CD8-positive, alpha-beta T cell (primary cell): ENCODE measurements at regions of chr2 and their contacts with region 1.

Region 1: DNA sequence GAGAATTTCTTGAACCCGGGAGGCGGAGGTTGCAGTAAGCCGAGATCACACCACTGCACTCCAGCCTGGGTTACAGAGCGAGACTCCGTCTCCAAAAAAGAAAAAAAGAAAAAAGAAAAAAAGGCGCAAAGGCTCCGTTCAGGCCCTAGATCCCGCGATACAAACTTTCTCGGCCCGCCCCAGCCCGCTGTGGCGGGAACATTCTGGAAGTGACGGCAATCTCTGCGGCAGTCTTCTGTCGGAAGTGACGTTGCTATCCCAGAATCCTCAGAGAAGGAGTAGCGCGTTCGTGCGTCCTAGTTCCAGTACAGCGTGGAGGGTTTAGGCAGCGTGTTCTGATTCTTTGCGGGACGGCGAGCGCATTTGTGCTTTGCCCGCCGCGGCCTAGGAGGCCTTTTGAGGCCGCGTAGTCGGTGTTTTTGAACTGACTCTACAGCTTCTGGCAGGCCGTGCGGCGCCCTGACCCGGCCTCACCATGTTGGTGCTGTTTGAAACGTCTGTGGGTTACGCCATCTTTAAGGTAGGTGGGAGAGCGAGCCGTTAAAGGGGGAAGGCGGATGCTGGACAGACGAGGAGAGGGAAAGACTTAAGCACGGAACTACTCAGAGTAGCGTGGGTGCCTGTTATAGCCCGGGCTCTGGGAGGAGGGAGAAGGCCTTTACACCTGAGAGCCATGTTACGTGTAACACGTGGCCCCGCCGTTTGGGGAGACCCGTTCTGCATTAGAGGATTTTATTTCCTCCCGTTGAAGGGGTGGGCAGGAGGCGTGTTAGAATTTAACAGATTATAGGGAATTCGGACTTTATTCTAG is at the start of gene NOP58:
- DNase-seq: peak; percentile 80 to 97 (median 87)
- ATAC-seq: peak; percentile 75
- H3K4me3 ChIP-seq: peak within 1 kb of the TSS; percentile 80 to 100
- H3K4me3 Mint-ChIP-seq: peak within 1 kb of the TSS; percentile 52
- H3K27ac ChIP-seq: peak within 1 kb of the TSS; percentile 97 to 98
- H3K27ac Mint-ChIP-seq: peak within 1 kb of the TSS; percentile 43
- H3K4me1 ChIP-seq: peaks cover 18% of the 10 kb centered on the region
- H3K4me1 Mint-ChIP-seq: peaks cover 21% of the 10 kb centered on the region
- H3K27me3 ChIP-seq: no peaks in the 10 kb centered on the region
- H3K27me3 Mint-ChIP-seq: no peaks in the 10 kb centered on the region
- CTCF ChIP-seq: no peak
- total RNA-seq, gene NOP58: 345 to 352 TPM

Region 2: GRCh38 chr2:201257956-201258665 is 1007.6 kb before region 1 on chr2:
- CTCF ChIA-PET with region 1: no interaction called
- POLR2A ChIA-PET with region 1: no interaction called
- intact Hi-C with region 1: loop called in 1 of 2 experiments (anchors 5 kb)
- DNase-seq: peak; percentile 87 to 99 (median 94)
- ATAC-seq: peak; percentile 69
- H3K4me3 ChIP-seq: peak overlapping the region; percentile 45 to 48
- H3K4me3 Mint-ChIP-seq: peak overlapping the region; percentile 89
- H3K27ac ChIP-seq: peak overlapping the region; percentile 85 to 93
- H3K27ac Mint-ChIP-seq: peak overlapping the region; percentile 97
- H3K4me1 ChIP-seq: peaks cover 68% of the 10 kb centered on the region
- H3K4me1 Mint-ChIP-seq: peaks cover 75% of the 10 kb centered on the region
- H3K27me3 ChIP-seq: no peaks in the 10 kb centered on the region
- H3K27me3 Mint-ChIP-seq: no peaks in the 10 kb centered on the region
- CTCF ChIP-seq: no peak

Region 3: GRCh38 chr2:202238234-202239197 is 27.2 kb before region 1 on chr2 and contains the start of gene SUMO1:
- CTCF ChIA-PET with region 1: no interaction called
- POLR2A ChIA-PET with region 1: interaction called, 9 read pairs
- intact Hi-C with region 1: loop called (anchors 1 kb)
- DNase-seq: peak; percentile 79 to 95 (median 92)
- ATAC-seq: peak; percentile 93
- H3K4me3 ChIP-seq: peak within 1 kb of the TSS; percentile 82 to 83
- H3K4me3 Mint-ChIP-seq: peak within 1 kb of the TSS; percentile 99
- H3K27ac ChIP-seq: peak within 1 kb of the TSS; percentile 82
- H3K27ac Mint-ChIP-seq: peak within 1 kb of the TSS; percentile 99
- H3K4me1 ChIP-seq: peaks cover 15% of the 10 kb centered on the region
- H3K4me1 Mint-ChIP-seq: peaks cover 43% of the 10 kb centered on the region
- H3K27me3 ChIP-seq: no peaks in the 10 kb centered on the region
- H3K27me3 Mint-ChIP-seq: no peaks in the 10 kb centered on the region
- CTCF ChIP-seq: no peak
- total RNA-seq, gene SUMO1: 86.1 to 87.4 TPM

Region 4: GRCh38 chr2:202307690-202308089 is 42.0 kb after region 1 on chr2:
- CTCF ChIA-PET with region 1: no interaction called
- POLR2A ChIA-PET with region 1: no interaction called
- intact Hi-C with region 1: loop called in 1 of 2 experiments (anchors 1 kb)
- DNase-seq: no peak
- ATAC-seq: no peak
- H3K4me3 ChIP-seq: no peak overlapping the region
- H3K4me3 Mint-ChIP-seq: no peak overlapping the region
- H3K27ac ChIP-seq: no peak overlapping the region
- H3K27ac Mint-ChIP-seq: no peak overlapping the region
- H3K4me1 ChIP-seq: no peaks in the 10 kb centered on the region
- H3K4me1 Mint-ChIP-seq: no peaks in the 10 kb centered on the region
- H3K27me3 ChIP-seq: no peaks in the 10 kb centered on the region
- H3K27me3 Mint-ChIP-seq: no peaks in the 10 kb centered on the region
- CTCF ChIP-seq: no peak

Region 5: DNA sequence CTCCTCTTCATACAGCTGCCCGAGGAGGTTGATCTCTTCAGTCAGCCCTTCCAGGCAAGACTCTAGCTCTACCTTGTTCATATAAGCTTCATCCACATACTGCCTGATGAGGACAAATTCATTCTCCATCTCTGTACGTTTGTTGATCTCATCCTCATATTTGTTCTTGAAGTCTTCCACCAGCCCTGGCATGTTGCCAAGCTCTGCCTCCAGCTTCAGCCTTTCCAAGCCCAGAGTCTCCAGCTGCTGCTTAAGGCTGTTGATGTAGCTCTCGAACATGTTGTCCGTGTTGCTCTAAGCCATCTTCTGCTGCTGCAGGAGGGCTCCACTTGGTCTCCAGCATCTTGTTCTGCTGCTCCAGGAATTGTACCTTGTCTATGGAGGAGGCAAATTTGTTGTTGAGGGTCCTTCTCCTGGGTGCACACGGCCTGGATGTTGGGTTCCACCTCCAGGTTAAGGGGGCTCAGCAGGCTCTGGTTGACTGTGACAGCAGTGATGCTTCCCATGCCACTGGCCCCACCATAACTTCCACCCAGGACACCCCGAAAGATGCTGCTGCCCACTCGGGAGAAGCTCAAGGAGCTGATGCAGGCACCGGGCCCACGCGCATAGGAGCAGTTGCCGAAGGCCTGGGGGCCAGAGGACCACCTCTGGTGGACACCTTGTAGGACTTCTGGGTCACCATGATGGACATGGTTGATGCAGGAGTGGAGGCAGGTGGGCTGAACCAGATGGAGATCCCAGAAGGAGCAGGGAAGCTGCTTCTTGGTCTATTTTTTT is 575.6 kb after region 1 on chr2:
- CTCF ChIA-PET with region 1: no interaction called
- POLR2A ChIA-PET with region 1: no interaction called
- intact Hi-C with region 1: no loop called
- DNase-seq: no peak
- ATAC-seq: no peak
- H3K4me3 ChIP-seq: no peak overlapping the region
- H3K4me3 Mint-ChIP-seq: no peak overlapping the region
- H3K27ac ChIP-seq: no peak overlapping the region
- H3K27ac Mint-ChIP-seq: no peak overlapping the region
- H3K4me1 ChIP-seq: no peaks in the 10 kb centered on the region
- H3K4me1 Mint-ChIP-seq: no peaks in the 10 kb centered on the region
- H3K27me3 ChIP-seq: no peaks in the 10 kb centered on the region
- H3K27me3 Mint-ChIP-seq: no peaks in the 10 kb centered on the region
- CTCF ChIP-seq: no peak

Region 6: GRCh38 chr2:202911512-202912341 is 646.1 kb after region 1 on chr2 and contains the starts of genes CARF and WDR12:
- CTCF ChIA-PET with region 1: no interaction called
- POLR2A ChIA-PET with region 1: no interaction called
- intact Hi-C with region 1: loop called (anchors 5 kb)
- DNase-seq: peak; percentile 77 to 96 (median 90)
- ATAC-seq: peak; percentile 81
- H3K4me3 ChIP-seq: peak within 1 kb of the TSS; percentile 89 to 98
- H3K4me3 Mint-ChIP-seq: peak within 1 kb of the TSS; percentile 96
- H3K27ac ChIP-seq: peak within 1 kb of the TSS; percentile 70 to 92
- H3K27ac Mint-ChIP-seq: peak within 1 kb of the TSS; percentile 92
- H3K4me1 ChIP-seq: peaks cover 17% of the 10 kb centered on the region
- H3K4me1 Mint-ChIP-seq: peaks cover 42% of the 10 kb centered on the region
- H3K27me3 ChIP-seq: no peaks in the 10 kb centered on the region
- H3K27me3 Mint-ChIP-seq: no peaks in the 10 kb centered on the region
- CTCF ChIP-seq: no peak
- total RNA-seq, gene CARF: 6.3 to 8.7 TPM
- total RNA-seq, gene WDR12: 4.7 to 6.4 TPM

Region 7: GRCh38 chr2:203014456-203015199 is 749.0 kb after region 1 on chr2 and contains the start of gene NBEAL1:
- CTCF ChIA-PET with region 1: no interaction called
- POLR2A ChIA-PET with region 1: no interaction called
- intact Hi-C with region 1: loop called (anchors 1 to 10 kb)
- DNase-seq: peak; percentile 92 to 99 (median 95)
- ATAC-seq: peak; percentile 90
- H3K4me3 ChIP-seq: peak within 1 kb of the TSS; percentile 77 to 97
- H3K4me3 Mint-ChIP-seq: peak within 1 kb of the TSS; percentile 88
- H3K27ac ChIP-seq: peak within 1 kb of the TSS; percentile 86 to 89
- H3K27ac Mint-ChIP-seq: peak within 1 kb of the TSS; percentile 92
- H3K4me1 ChIP-seq: peaks cover 37% of the 10 kb centered on the region
- H3K4me1 Mint-ChIP-seq: peaks cover 46% of the 10 kb centered on the region
- H3K27me3 ChIP-seq: no peaks in the 10 kb centered on the region
- H3K27me3 Mint-ChIP-seq: no peaks in the 10 kb centered on the region
- CTCF ChIP-seq: no peak
- total RNA-seq, gene NBEAL1: 11.2 to 13.2 TPM